CD14-positive monocyte (primary cell): ENCODE measurements at regions of chr19 and their contacts with region 1.

Region 1: GRCh38 chr19:1568320-1569019 is at the start of gene MEX3D:
- DNase-seq: peak; percentile 45 to 79 (median 70)
- H3K4me3 ChIP-seq: peak within 1 kb of the TSS in 2 of 3 experiments; percentile 7 to 70
- H3K4me3 Mint-ChIP-seq: peak within 1 kb of the TSS; percentile 64 to 82
- H3K27ac ChIP-seq: no peak within 1 kb of the TSS
- H3K27ac Mint-ChIP-seq: peak within 1 kb of the TSS in 1 of 7 donors; percentile 71
- H3K4me1 ChIP-seq: peaks cover 7 to 15% of the 10 kb centered on the region in 2 donors
- H3K4me1 Mint-ChIP-seq: peaks cover 3% of the 10 kb centered on the region
- H3K27me3 ChIP-seq: peaks cover 3 to 27% of the 10 kb centered on the region in 2 donors
- H3K27me3 Mint-ChIP-seq: peaks cover 18 to 64% (median 36%) of the 10 kb centered on the region in 3 donors
- CTCF ChIP-seq: no peak
- polyA plus RNA-seq, gene MEX3D: 0.08 to 1.0 (median 0.10) TPM

Region 2: GRCh38 chr19:1490311-1491113 is 78.0 kb before region 1 on chr19 and contains the start of gene PCSK4:
- intact Hi-C with region 1: loop called in 1 of 2 experiments (anchors 5 kb)
- DNase-seq: peak; percentile 95 to 98 (median 98)
- H3K4me3 ChIP-seq: peak within 1 kb of the TSS; percentile 36 to 81 (median 54)
- H3K4me3 Mint-ChIP-seq: peak within 1 kb of the TSS; percentile 86 to 93
- H3K27ac ChIP-seq: peak within 1 kb of the TSS in 1 of 2 donors; percentile 17
- H3K27ac Mint-ChIP-seq: peak within 1 kb of the TSS; percentile 79 to 96 (median 92)
- H3K4me1 ChIP-seq: peaks cover 18 to 35% of the 10 kb centered on the region in 2 donors
- H3K4me1 Mint-ChIP-seq: peaks cover 20% of the 10 kb centered on the region
- H3K27me3 ChIP-seq: peaks cover 0 to 21% of the 10 kb centered on the region in 2 donors
- H3K27me3 Mint-ChIP-seq: peaks cover 9 to 29% (median 27%) of the 10 kb centered on the region in 3 donors
- CTCF ChIP-seq: no peak
- polyA plus RNA-seq, gene PCSK4: 0.34 to 1.0 TPM in 2 of 3 donors, not detected in the other

Region 3: DNA sequence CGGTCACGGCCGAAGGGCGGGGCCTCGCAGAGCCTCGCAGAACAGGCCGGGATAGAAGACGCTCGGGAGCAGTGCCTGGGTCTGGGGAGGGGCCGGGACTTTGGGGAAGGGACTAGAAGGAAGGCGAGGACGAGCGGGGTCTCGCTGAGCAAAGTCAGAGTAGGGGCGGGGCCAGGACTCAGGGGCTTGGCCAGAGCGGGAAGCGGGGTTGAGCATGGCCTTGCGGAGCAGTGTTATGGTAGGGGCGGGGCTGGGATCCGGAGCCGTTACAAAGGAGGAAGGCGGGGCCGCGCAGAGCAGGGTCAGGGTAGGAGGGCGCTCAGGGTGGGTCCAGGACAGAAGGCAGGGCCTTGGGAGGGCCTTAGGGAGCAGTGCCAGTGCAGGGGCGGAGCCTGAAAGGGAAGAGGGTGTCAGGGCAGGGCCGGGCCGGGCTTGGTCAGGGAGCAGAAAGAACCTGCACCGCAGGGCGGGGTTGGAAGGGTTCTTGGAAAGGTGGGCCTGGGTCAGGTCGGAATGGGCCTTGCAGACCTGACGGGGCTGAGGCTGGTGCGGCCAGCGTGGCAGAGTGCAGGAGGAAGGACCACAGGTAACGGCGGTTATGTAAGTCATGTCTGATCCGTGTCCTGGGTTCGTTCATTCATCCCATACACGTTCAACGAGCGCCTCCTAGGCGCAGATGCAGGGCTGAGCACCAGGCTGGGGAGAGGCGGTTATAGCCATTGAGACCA is 244.2 kb after region 1 on chr19:
- intact Hi-C with region 1: loop called in 1 of 2 experiments (anchors 5 kb)
- DNase-seq: peak; percentile 93 to 97 (median 94)
- H3K4me3 ChIP-seq: peak overlapping the region; percentile 60 to 72 (median 63)
- H3K4me3 Mint-ChIP-seq: peak overlapping the region; percentile 97 to 98
- H3K27ac ChIP-seq: peak overlapping the region; percentile 82 to 87
- H3K27ac Mint-ChIP-seq: peak overlapping the region; percentile 94 to 99 (median 98)
- H3K4me1 ChIP-seq: peaks cover 19 to 26% of the 10 kb centered on the region in 2 donors
- H3K4me1 Mint-ChIP-seq: peaks cover 16% of the 10 kb centered on the region
- H3K27me3 ChIP-seq: no peaks in the 10 kb centered on the region
- H3K27me3 Mint-ChIP-seq: no peaks in the 10 kb centered on the region
- CTCF ChIP-seq: peak; percentile 68